ENCODE measurements at regions of chr9 and their contacts with region 1.

Region 1: GRCh38 chr9:6484210-6484609 is 71.2 kb downstream of the UHRF2 start:
- DNase-seq: no peak
- ATAC-seq: no peak
- H3K4me3 ChIP-seq: no peak overlapping the region
- H3K4me3 Mint-ChIP-seq: no peak overlapping the region
- H3K27ac ChIP-seq: no peak overlapping the region
- H3K27ac Mint-ChIP-seq: no peak overlapping the region
- H3K4me1 ChIP-seq: no peaks in the 10 kb centered on the region
- H3K4me1 Mint-ChIP-seq: no peaks in the 10 kb centered on the region
- H3K27me3 ChIP-seq: no peaks in the 10 kb centered on the region
- H3K27me3 Mint-ChIP-seq: no peaks in the 10 kb centered on the region

Region 2: GRCh38 chr9:6495466-6495865 is 11.3 kb after region 1 on chr9:
- CTCF ChIA-PET with region 1: no interaction called
- POLR2A ChIA-PET with region 1: interaction called in 1 of 2 experiments, 10 read pairs
- DNase-seq: no peak
- ATAC-seq: no peak
- H3K4me3 ChIP-seq: no peak overlapping the region
- H3K4me3 Mint-ChIP-seq: no peak overlapping the region
- H3K27ac ChIP-seq: no peak overlapping the region
- H3K27ac Mint-ChIP-seq: peak overlapping the region; percentile 1 to 57
- H3K4me1 ChIP-seq: no peaks in the 10 kb centered on the region
- H3K4me1 Mint-ChIP-seq: peaks cover 7 to 10% (median 8%) of the 10 kb centered on the region in 3 donors
- H3K27me3 ChIP-seq: no peaks in the 10 kb centered on the region
- H3K27me3 Mint-ChIP-seq: no peaks in the 10 kb centered on the region